ENCODE measurements at regions of chrX and their contacts with region 1.

Region 1: GRCh38 chrX:108275732-108276131 is 162.5 kb downstream of the COL4A6 start:
- DNase-seq: no peak
- H3K4me3 ChIP-seq: no peak overlapping the region
- H3K27ac ChIP-seq: peak overlapping the region in 1 of 4 donors; percentile 52
- H3K4me1 ChIP-seq: peaks cover 0 to 11% (median 5%) of the 10 kb centered on the region in 4 donors
- H3K27me3 ChIP-seq: no peaks in the 10 kb centered on the region
- CTCF ChIP-seq: no peak
- EP300 ChIP-seq: no peak
- POLR2A ChIP-seq: no peak

Region 2: GRCh38 chrX:108224727-108225621 is 50.8 kb before region 1 on chrX:
- intact Hi-C with region 1: no loop called
- DNase-seq: no peak
- H3K4me3 ChIP-seq: no peak overlapping the region
- H3K27ac ChIP-seq: peak overlapping the region in 1 of 4 donors; percentile 69
- H3K4me1 ChIP-seq: no peaks in the 10 kb centered on the region
- H3K27me3 ChIP-seq: no peaks in the 10 kb centered on the region
- CTCF ChIP-seq: peak in 3 of 4 experiments; percentile 27 to 46 (median 39)
- EP300 ChIP-seq: no peak
- POLR2A ChIP-seq: no peak

Region 3: DNA sequence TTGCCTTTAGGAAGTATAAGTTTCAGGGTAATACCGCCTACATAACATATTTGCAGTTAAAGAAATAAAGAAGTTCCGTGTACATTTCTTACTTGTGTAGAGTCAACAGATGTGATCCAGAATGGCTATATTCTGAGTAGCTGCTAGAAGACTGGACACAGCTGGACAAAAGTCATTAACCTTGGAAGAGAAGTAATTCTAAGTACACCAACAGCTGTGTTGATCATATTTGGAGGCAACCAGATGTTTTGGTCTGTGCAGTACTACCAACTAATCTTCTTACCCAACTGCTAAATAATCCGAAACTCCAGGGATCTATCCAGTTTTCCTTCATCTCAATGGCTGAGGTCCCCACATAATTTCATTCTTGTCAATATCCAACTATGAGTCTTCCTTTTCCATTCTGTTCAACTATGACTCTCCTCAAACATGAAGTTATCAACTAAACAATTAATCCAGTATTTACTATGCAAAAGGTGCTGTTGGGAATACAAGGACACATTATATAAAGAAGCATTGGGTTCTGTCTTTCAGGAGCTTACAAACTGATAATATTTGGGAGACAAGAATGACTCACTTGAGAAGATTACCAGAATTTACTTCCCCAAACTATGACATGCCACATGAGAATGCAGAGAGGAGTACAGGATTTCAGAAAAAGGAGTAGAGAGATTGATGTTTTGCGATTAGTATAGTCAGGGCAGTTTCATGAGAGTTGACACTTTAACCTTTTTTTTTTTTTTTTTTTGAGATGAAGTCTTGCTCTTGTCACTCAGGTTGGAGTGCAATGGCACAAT is 84.3 kb after region 1 on chrX:
- intact Hi-C with region 1: loop called (anchors 2 kb)
- DNase-seq: no peak
- H3K4me3 ChIP-seq: no peak overlapping the region
- H3K27ac ChIP-seq: peak overlapping the region in 1 of 4 donors; percentile 19
- H3K4me1 ChIP-seq: peaks cover 0 to 20% (median 7%) of the 10 kb centered on the region in 4 donors
- H3K27me3 ChIP-seq: no peaks in the 10 kb centered on the region
- CTCF ChIP-seq: no peak
- EP300 ChIP-seq: no peak
- POLR2A ChIP-seq: no peak